Transverse colon (tissue), 4 donors: ENCODE measurements at regions of chr5 and their contacts with region 1.

Region 1: GRCh38 chr5:147369742-147370374 is 135.0 kb downstream of the STK32A start:
- DNase-seq: no peak
- H3K4me3 ChIP-seq: no peak overlapping the region
- H3K27ac ChIP-seq: no peak overlapping the region
- H3K4me1 ChIP-seq: no peaks in the 10 kb centered on the region
- H3K27me3 ChIP-seq: no peaks in the 10 kb centered on the region
- CTCF ChIP-seq: peak; percentile 48 to 66 (median 60)
- EP300 ChIP-seq: no peak
- POLR2A ChIP-seq: no peak

Region 2: GRCh38 chr5:146533260-146533857 is 836.5 kb before region 1 on chr5:
- in situ Hi-C with region 1: loop called in 1 of 4 experiments (anchors 25 kb)
- intact Hi-C with region 1: no loop called
- DNase-seq: peak; percentile 73
- H3K4me3 ChIP-seq: no peak overlapping the region
- H3K27ac ChIP-seq: no peak overlapping the region
- H3K4me1 ChIP-seq: no peaks in the 10 kb centered on the region
- H3K27me3 ChIP-seq: no peaks in the 10 kb centered on the region
- CTCF ChIP-seq: peak; percentile 61 to 76 (median 71)
- EP300 ChIP-seq: no peak
- POLR2A ChIP-seq: no peak

Region 3: GRCh38 chr5:147234825-147235635 is 134.8 kb before region 1 on chr5 and contains the start of gene STK32A:
- in situ Hi-C with region 1: loop called in 2 of 4 experiments (anchors 25 kb)
- intact Hi-C with region 1: no loop called
- DNase-seq: peak; percentile 39
- H3K4me3 ChIP-seq: peak within 1 kb of the TSS; percentile 29 to 50 (median 36)
- H3K27ac ChIP-seq: peak within 1 kb of the TSS; percentile 8 to 64 (median 51)
- H3K4me1 ChIP-seq: peaks cover 0 to 11% (median 4%) of the 10 kb centered on the region in 4 donors
- H3K27me3 ChIP-seq: peaks cover 30% of the 10 kb centered on the region
- CTCF ChIP-seq: no peak
- EP300 ChIP-seq: no peak
- POLR2A ChIP-seq: no peak
- total RNA-seq, gene STK32A: 1.4 to 1.6 TPM in 2 of 4 donors, not detected in the others